Heart right ventricle (tissue), 16 donors: ENCODE measurements at regions of chr15 and their contacts with region 1.

Region 1: GRCh38 chr15:39767921-39768320 is 14.7 kb downstream of the FSIP1 start:
- DNase-seq: no peak
- ATAC-seq: no peak
- H3K4me3 ChIP-seq: no peak overlapping the region
- H3K27ac ChIP-seq: no peak overlapping the region
- H3K4me1 ChIP-seq: peaks cover 0 to 15% (median 0%) of the 10 kb centered on the region in 9 donors
- H3K27me3 ChIP-seq: no peaks in the 10 kb centered on the region
- CTCF ChIP-seq: no peak

Region 2: DNA sequence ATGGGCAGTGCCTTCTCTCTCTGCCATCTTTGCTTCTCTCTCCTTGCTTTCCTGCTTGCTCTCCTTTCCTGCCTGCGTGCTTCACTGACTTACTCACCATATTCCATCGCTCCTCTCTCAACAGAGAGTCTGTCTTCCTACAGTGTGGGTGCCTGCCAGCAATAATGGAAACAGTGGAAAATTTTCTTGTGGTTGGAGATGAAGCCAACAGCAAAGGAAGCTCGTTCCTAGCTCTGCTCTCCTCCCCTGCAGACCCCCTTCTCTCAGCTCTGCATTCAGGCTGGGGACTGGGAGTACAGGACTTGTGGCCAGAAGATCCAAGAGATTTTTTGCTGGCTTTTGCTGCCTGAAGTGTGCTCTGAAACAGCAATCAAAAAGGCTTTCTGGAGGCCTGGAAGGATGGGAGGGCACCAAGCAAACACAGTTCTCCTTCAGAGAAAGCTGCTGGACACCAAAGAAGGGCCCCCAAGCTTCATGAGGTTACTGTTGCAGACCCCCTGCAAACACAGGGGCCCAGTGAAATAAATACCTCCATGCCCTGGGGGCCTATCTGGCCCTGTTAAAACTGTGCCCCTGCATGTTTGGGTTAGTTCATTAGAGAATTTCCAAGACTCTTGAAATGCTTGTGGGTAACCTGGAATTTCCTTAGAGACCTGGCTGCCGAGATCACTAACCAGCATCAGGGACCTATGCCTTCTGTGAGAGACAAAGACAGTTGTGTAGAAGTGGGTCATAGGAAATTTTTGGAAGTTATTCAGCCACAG is 1053.4 kb before region 1 on chr15:
- intact Hi-C with region 1: loop called in 1 of 10 experiments (anchors 10 kb)
- DNase-seq: no peak
- ATAC-seq: no peak
- H3K4me3 ChIP-seq: no peak overlapping the region
- H3K27ac ChIP-seq: no peak overlapping the region
- H3K4me1 ChIP-seq: no peaks in the 10 kb centered on the region
- H3K27me3 ChIP-seq: no peaks in the 10 kb centered on the region
- CTCF ChIP-seq: no peak

Region 3: GRCh38 chr15:38843736-38844590 is 924.0 kb before region 1 on chr15:
- intact Hi-C with region 1: loop called in 1 of 10 experiments (anchors 10 kb)
- DNase-seq: no peak
- ATAC-seq: no peak
- H3K4me3 ChIP-seq: no peak overlapping the region
- H3K27ac ChIP-seq: no peak overlapping the region
- H3K4me1 ChIP-seq: peaks cover 0 to 7% (median 0%) of the 10 kb centered on the region in 9 donors
- H3K27me3 ChIP-seq: no peaks in the 10 kb centered on the region
- CTCF ChIP-seq: no peak

Region 4: GRCh38 chr15:39167164-39168058 is 600.5 kb before region 1 on chr15:
- intact Hi-C with region 1: no loop called
- DNase-seq: no peak
- ATAC-seq: peak in 4 of 8 donors; percentile 20 to 44 (median 29)
- H3K4me3 ChIP-seq: no peak overlapping the region
- H3K27ac ChIP-seq: peak overlapping the region in 6 of 10 donors; percentile 28 to 71 (median 40)
- H3K4me1 ChIP-seq: peaks cover 0 to 27% (median 7%) of the 10 kb centered on the region in 9 donors
- H3K27me3 ChIP-seq: no peaks in the 10 kb centered on the region
- CTCF ChIP-seq: no peak